ENCODE measurements at regions of chr11 and their contacts with region 1.

Region 1: GRCh38 chr11:10728789-10729472 is 22.1 kb upstream of the CTR9 start:
- DNase-seq: no peak
- ATAC-seq: no peak
- H3K4me3 Mint-ChIP-seq: no peak overlapping the region
- H3K27ac Mint-ChIP-seq: no peak overlapping the region
- H3K4me1 Mint-ChIP-seq: peaks cover 11 to 19% (median 16%) of the 10 kb centered on the region in 4 donors
- H3K27me3 Mint-ChIP-seq: peaks cover 6 to 28% (median 11%) of the 10 kb centered on the region in 5 donors

Region 2: GRCh38 chr11:10716127-10716526 is 12.8 kb before region 1 on chr11:
- POLR2A ChIA-PET with region 1: no interaction called
- DNase-seq: no peak
- ATAC-seq: no peak
- H3K4me3 Mint-ChIP-seq: no peak overlapping the region
- H3K27ac Mint-ChIP-seq: no peak overlapping the region
- H3K4me1 Mint-ChIP-seq: peaks cover 0 to 4% (median 0%) of the 10 kb centered on the region in 4 donors
- H3K27me3 Mint-ChIP-seq: peaks cover 2 to 26% (median 10%) of the 10 kb centered on the region in 5 donors

Region 3: DNA sequence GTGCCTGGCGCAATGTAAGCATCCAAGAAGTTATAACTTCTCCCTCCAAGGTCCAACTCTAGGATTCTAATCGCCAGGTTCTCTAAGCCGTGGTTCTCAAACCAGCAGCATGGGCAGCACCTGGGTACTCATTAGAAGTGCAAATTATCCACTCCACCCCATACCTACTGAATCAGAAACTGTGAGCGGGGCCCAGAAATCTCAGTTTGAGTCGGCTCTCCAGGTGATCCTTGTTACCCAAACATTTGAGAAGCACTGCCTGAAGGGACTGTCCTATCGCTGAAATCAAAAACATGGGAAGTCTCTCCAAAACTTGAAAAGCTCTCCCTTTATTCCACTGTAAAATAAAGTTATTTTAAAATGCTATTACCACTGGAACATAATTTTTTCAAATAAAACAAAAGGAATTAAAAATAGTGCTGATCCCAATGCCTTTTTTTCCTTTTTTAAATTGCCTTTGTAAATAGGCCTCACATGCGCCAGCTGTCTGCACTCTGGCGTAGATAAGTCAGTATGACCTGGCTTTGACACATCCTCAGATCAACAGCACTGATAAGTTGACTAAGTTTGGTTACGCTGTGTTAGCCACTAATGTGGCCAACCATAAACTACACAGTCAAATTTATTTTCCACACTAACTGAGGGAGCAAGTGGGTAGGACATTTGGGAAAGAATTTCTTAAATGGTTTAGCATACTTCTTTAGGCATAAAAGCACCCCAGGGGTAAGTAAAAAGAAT is 13.7 kb after region 1 on chr11:
- POLR2A ChIA-PET with region 1: interaction called, 10 read pairs
- DNase-seq: peak in 3 of 10 donors; percentile 9 to 32 (median 19)
- ATAC-seq: peak; percentile 81 to 91
- H3K4me3 Mint-ChIP-seq: peak overlapping the region in 8 of 10 donors; percentile 12 to 65 (median 57)
- H3K27ac Mint-ChIP-seq: peak overlapping the region in 8 of 10 donors; percentile 13 to 84 (median 70)
- H3K4me1 Mint-ChIP-seq: peaks cover 14 to 31% (median 29%) of the 10 kb centered on the region in 4 donors
- H3K27me3 Mint-ChIP-seq: no peaks in the 10 kb centered on the region